ENCODE measurements at regions of chr2 and their contacts with region 1.

Region 1: DNA sequence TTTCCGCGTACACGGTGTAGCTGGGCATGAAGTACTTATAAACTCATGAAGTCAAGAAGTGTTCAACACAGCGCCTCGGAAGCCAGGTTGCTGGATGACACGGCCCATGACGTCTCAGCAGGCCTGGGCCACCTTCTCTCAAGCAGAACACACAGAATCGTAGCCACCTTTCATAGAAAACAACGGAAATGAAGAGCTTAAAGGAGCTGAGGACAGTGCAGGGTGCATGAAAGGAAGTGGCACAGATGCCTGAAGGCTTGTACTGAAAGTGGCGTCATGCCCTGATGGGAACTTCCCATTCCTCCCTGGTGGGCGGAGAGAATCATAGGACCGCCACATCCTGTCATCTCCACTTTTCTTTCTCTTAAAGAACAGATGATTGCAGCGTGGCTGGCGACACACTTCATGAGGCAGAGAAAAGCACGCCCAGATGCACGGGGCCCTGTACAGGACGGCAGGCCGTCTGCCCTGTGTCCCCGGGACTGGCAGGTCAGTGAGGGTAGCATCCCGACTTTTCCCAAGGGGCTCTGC is 31.1 kb downstream of the HDAC4 start:
- DNase-seq: no peak
- H3K4me3 ChIP-seq: no peak overlapping the region
- H3K27ac ChIP-seq: no peak overlapping the region
- H3K4me1 ChIP-seq: no peaks in the 10 kb centered on the region
- H3K27me3 ChIP-seq: no peaks in the 10 kb centered on the region
- CTCF ChIP-seq: no peak
- POLR2A ChIP-seq: no peak

Region 2: GRCh38 chr2:239401067-239401880 is 31.6 kb after region 1 on chr2:
- CTCF ChIA-PET with region 1: no interaction called
- POLR2A ChIA-PET with region 1: no interaction called
- dilution Hi-C with region 1: no loop called
- intact Hi-C with region 1: no loop called
- DNase-seq: peak; percentile 99
- H3K4me3 ChIP-seq: peak overlapping the region; percentile 67 to 75 (median 71)
- H3K27ac ChIP-seq: peak overlapping the region; percentile 100
- H3K4me1 ChIP-seq: peaks cover 14% of the 10 kb centered on the region
- H3K27me3 ChIP-seq: no peaks in the 10 kb centered on the region
- CTCF ChIP-seq: no peak
- POLR2A ChIP-seq: peak; percentile 97

Region 3: GRCh38 chr2:239514753-239515530 is 145.2 kb after region 1 on chr2:
- CTCF ChIA-PET with region 1: no interaction called
- POLR2A ChIA-PET with region 1: no interaction called
- dilution Hi-C with region 1: no loop called
- intact Hi-C with region 1: no loop called
- DNase-seq: no peak
- H3K4me3 ChIP-seq: no peak overlapping the region
- H3K27ac ChIP-seq: no peak overlapping the region
- H3K4me1 ChIP-seq: no peaks in the 10 kb centered on the region
- H3K27me3 ChIP-seq: no peaks in the 10 kb centered on the region
- CTCF ChIP-seq: no peak
- POLR2A ChIP-seq: no peak

Region 4: GRCh38 chr2:241309684-241310117 is 1940.0 kb after region 1 on chr2:
- CTCF ChIA-PET with region 1: no interaction called
- POLR2A ChIA-PET with region 1: no interaction called
- dilution Hi-C with region 1: no loop called
- intact Hi-C with region 1: loop called (anchors 10 kb)
- DNase-seq: no peak
- H3K4me3 ChIP-seq: no peak overlapping the region
- H3K27ac ChIP-seq: no peak overlapping the region
- H3K4me1 ChIP-seq: peaks cover 8% of the 10 kb centered on the region
- H3K27me3 ChIP-seq: no peaks in the 10 kb centered on the region
- CTCF ChIP-seq: no peak
- POLR2A ChIP-seq: no peak